ENCODE measurements at regions of chr15 and their contacts with region 1.

Region 1: DNA sequence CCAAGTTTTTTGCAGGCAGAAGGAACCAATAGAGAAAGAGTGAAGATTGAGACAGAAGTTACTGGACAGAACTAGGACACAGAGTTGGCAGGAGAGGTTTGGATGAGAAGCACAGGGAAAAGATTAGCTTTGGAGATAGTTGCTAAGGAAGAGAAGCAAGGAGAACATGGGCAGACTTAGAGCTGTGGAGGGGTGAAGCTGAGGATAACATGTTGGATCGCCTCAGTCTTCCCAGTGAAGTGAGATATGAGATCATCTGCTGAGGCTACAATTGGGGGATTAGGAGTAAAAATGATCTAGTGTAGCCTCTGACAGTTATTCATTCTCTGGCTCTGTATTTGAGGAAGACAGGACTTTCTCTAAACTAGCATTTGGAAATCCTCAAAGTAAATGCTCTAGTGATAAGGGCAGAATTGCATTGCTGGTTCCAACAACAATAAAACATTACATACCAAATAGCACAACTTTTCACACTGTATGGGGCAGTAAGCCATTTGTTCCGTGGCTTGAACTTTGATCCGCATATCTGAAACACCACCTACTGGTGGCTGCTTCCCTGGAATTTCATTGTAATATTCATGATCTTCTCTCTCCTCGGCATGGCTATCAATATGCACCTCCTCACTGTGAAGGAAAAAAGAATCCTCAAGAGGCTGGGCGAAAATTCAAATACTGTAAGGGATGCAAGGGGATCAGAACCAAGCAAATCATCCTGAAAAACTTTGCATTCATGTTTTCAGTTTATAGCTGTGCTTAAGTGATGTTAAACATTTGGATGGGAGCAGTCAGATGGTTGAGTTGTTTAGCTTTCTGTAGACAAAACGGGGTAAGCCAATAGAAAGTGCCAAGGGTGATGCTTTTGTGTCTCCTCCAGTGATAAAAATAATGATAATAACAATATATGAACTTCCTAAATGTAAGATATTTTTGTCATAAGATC is 22.2 kb upstream of the EID1 start:
- DNase-seq: no peak
- H3K4me3 ChIP-seq: no peak overlapping the region
- H3K27ac ChIP-seq: peak overlapping the region in 3 of 59 donors; percentile 2 to 40 (median 31)
- H3K27me3 ChIP-seq: no peaks in the 10 kb centered on the region
- CTCF ChIP-seq: peak in 54 of 56 donors; percentile 22 to 72 (median 52)

Region 2: GRCh38 chr15:48358229-48358641 is 497.5 kb before region 1 on chr15:
- intact Hi-C with region 1: loop called in 1 of 2 experiments (anchors 2 kb)
- DNase-seq: no peak
- H3K4me3 ChIP-seq: peak overlapping the region in 10 of 59 donors; percentile 1 to 39 (median 7)
- H3K27ac ChIP-seq: no peak overlapping the region
- H3K27me3 ChIP-seq: no peaks in the 10 kb centered on the region
- CTCF ChIP-seq: peak; percentile 56 to 87 (median 73)

Region 3: GRCh38 chr15:48810414-48811317 is 45.1 kb before region 1 on chr15 and contains the start of gene CEP152:
- intact Hi-C with region 1: loop called in 1 of 2 experiments (anchors 5 kb)
- DNase-seq: peak; percentile 79 to 98 (median 96)
- H3K4me3 ChIP-seq: peak within 1 kb of the TSS; percentile 56 to 94 (median 79)
- H3K27ac ChIP-seq: peak within 1 kb of the TSS in 2 of 59 donors; percentile 49 to 57
- H3K27me3 ChIP-seq: no peaks in the 10 kb centered on the region
- CTCF ChIP-seq: peak in 14 of 56 donors; percentile 5 to 33 (median 18)
- total RNA-seq, gene CEP152: 2.5 to 15.4 (median 5.8) TPM

Region 4: DNA sequence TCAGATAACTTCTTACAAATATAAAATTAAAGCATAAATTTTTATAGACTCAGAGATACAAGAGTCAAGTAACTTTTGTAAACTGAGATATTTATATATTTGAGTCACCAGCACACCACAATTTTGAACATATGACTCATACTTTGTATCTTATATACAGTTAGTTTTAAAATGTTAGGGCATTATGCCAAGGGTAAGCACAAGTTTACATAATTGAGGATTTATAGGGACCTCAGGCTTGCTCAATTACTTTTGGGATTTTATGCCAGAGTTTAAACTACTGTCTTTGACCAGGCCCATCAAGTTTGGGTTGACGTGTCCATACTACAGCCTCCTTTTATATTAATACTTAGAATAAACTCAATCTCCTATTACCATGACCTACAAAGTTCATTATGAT is 559.9 kb after region 1 on chr15:
- intact Hi-C with region 1: loop called (anchors 10 kb)
- DNase-seq: no peak
- H3K4me3 ChIP-seq: no peak overlapping the region
- H3K27ac ChIP-seq: no peak overlapping the region
- H3K27me3 ChIP-seq: peaks cover 0 to 4% (median 0%) of the 10 kb centered on the region in 45 donors
- CTCF ChIP-seq: no peak

Measured in dorsolateral prefrontal cortex (tissue), 120 donors.